ENCODE measurements at regions of chr7 and their contacts with region 1.

Region 1: DNA sequence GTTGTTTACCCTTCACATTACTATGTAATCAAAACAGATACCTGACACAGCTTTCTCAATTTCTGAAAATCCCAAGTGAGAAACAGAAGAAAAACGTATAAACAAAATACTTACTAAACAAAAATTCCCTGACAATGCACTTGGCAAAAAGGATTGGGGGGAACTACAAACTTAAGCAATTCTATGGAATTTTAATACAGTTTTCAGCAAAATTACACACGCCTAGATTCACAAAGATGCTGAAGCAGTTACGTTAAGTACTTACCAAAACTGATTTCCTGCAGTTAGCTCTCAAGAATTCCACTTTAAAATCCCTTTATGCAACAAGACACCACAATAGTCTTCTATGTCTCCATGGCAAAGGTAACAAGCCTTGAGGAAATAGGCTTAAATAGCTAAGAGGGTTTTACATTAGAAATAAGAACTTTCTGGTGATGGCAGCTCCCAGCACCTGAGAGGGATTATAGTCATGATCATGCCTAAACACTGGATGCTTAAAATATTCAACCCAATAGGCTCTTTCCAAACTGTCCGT is 10.8 kb downstream of the TOMM7 start:
- DNase-seq: no peak
- ATAC-seq: no peak
- H3K4me3 Mint-ChIP-seq: no peak overlapping the region
- H3K27ac Mint-ChIP-seq: peak overlapping the region; percentile 98
- H3K4me1 Mint-ChIP-seq: peaks cover 78% of the 10 kb centered on the region
- H3K27me3 Mint-ChIP-seq: no peaks in the 10 kb centered on the region
- CTCF ChIP-seq: no peak

Region 2: GRCh38 chr7:22469371-22470143 is 342.3 kb before region 1 on chr7:
- CTCF ChIA-PET with region 1: no interaction called
- POLR2A ChIA-PET with region 1: no interaction called
- DNase-seq: no peak
- ATAC-seq: no peak
- H3K4me3 Mint-ChIP-seq: no peak overlapping the region
- H3K27ac Mint-ChIP-seq: no peak overlapping the region
- H3K4me1 Mint-ChIP-seq: no peaks in the 10 kb centered on the region; the same call in 1 of the 2 replicates
- H3K27me3 Mint-ChIP-seq: no peaks in the 10 kb centered on the region
- CTCF ChIP-seq: no peak

Region 3: GRCh38 chr7:22822486-22823141 is 10.8 kb after region 1 on chr7 and contains the start of gene TOMM7:
- CTCF ChIA-PET with region 1: interaction called, 21 read pairs
- POLR2A ChIA-PET with region 1: interaction called, 4 read pairs
- DNase-seq: peak; percentile 92
- ATAC-seq: peak; percentile 90
- H3K4me3 Mint-ChIP-seq: peak within 1 kb of the TSS; percentile 99
- H3K27ac Mint-ChIP-seq: peak within 1 kb of the TSS; percentile 98
- H3K4me1 Mint-ChIP-seq: peaks cover 40% of the 10 kb centered on the region
- H3K27me3 Mint-ChIP-seq: no peaks in the 10 kb centered on the region
- CTCF ChIP-seq: no peak
- total RNA-seq, gene TOMM7: 500 to 506 TPM (median 502 TPM) in 3 replicates